ENCODE measurements at regions of chrX and their contacts with region 1.

Region 1: GRCh38 chrX:54639346-54640102 is 109.5 kb downstream of the GNL3L start:
- DNase-seq: peak; percentile 88 to 96 (median 88)
- H3K4me3 ChIP-seq: peak overlapping the region; percentile 81
- H3K4me3 Mint-ChIP-seq: peak overlapping the region; percentile 93 to 98 (median 97)
- H3K27ac ChIP-seq: peak overlapping the region; percentile 98
- H3K27ac Mint-ChIP-seq: peak overlapping the region; percentile 98 to 100 (median 100)
- H3K4me1 ChIP-seq: peaks cover 7% of the 10 kb centered on the region
- H3K4me1 Mint-ChIP-seq: peaks cover 9 to 20% (median 15%) of the 10 kb centered on the region in 3 donors
- H3K27me3 ChIP-seq: no peaks in the 10 kb centered on the region
- H3K27me3 Mint-ChIP-seq: peaks cover 0 to 4% of the 10 kb centered on the region in 2 donors

Region 2: DNA sequence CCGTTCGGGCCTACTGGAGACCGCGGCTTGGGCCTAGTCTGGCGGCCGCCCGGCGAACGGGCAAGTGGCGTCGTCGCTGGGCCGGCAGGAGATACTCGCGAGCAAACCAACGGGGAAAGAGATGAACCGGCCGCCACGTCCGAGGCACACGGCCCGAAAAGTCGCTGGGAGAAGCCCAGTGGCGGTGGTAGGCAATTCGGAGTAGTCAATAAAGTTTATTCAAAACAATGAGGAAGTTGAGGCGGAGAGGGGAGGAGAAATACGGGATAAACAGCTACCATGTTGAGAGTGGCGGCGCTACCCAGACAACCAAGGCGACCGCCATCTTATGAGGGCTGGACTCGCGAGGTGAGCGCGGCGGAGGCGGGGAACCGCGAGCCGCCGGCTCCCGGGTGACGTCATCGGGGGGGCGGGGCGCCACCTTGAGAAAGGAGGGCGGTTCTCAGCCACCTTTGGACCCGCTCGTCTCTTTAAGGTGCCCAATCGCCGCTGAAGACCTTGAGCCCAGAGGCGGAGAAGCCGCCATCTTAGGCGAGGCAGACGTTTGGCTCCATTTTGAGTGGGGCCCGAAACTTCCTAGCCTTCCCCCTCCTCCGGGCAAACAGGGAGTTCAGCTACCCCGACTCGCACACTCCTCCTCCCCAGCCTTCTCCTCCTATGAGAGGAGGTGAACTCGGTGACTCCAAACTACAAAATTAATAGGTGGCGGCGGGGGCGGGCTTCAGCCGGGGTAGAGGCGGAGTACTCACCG is 595.2 kb before region 1 on chrX and contains the start of gene PHF8:
- CTCF ChIA-PET with region 1: interaction called, 4 read pairs
- POLR2A ChIA-PET with region 1: interaction called, 15 read pairs
- DNase-seq: peak; percentile 91 to 97 (median 94)
- H3K4me3 ChIP-seq: peak within 1 kb of the TSS; percentile 85
- H3K4me3 Mint-ChIP-seq: peak within 1 kb of the TSS; percentile 89 to 97 (median 94)
- H3K27ac ChIP-seq: peak within 1 kb of the TSS; percentile 81
- H3K27ac Mint-ChIP-seq: peak within 1 kb of the TSS; percentile 96 to 100 (median 98)
- H3K4me1 ChIP-seq: peaks cover 13% of the 10 kb centered on the region
- H3K4me1 Mint-ChIP-seq: peaks cover 24 to 28% (median 27%) of the 10 kb centered on the region in 3 donors
- H3K27me3 ChIP-seq: no peaks in the 10 kb centered on the region
- H3K27me3 Mint-ChIP-seq: peaks cover 0 to 2% of the 10 kb centered on the region in 2 donors
- total RNA-seq, gene PHF8: 42.7 to 45.5 TPM

Region 3: DNA sequence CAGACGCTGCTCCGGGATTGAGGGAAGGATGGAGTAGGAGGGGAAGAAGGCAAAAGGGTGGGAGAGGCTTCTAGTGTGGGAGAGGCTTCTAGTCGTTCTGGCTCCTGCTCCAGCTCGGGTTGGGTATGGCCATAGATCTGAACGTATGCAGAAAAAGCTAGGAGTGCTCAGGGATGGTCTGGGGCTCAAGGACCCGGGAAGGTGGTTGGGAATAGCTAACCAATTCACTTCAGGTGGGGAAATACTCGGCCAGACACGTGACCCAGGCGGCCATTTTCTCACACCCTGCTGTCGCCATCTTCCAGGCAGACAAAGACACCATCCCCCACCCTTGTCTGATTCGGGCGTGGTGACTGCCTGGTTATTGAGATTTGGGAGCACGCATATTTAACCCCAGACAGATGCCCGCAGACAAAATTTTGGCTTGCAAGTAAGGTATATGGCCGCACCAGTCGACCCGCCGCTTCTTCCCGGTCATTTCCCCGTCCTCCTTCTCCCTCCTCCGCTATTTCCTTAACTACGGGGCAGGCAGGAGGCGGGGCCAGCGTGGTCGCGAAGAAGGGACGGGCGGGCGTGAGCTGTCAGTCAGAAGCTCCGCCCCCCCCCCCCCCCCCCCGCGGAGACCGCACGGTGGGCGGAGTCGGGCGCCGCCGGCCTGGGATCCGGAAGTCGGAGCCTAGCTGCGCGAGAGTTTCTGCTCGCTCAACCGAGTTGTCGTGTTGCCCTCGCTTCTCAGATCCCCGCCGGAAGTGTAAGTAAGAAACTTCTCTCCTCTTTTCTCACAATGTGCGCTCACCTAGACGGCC is 109.8 kb before region 1 on chrX and contains the start of gene GNL3L:
- CTCF ChIA-PET with region 1: interaction called, 10 read pairs
- POLR2A ChIA-PET with region 1: interaction called, 33 read pairs
- DNase-seq: peak; percentile 72 to 89 (median 77)
- H3K4me3 ChIP-seq: peak within 1 kb of the TSS; percentile 81
- H3K4me3 Mint-ChIP-seq: peak within 1 kb of the TSS; percentile 92 to 98 (median 96)
- H3K27ac ChIP-seq: peak within 1 kb of the TSS; percentile 86
- H3K27ac Mint-ChIP-seq: peak within 1 kb of the TSS; percentile 93 to 99 (median 95)
- H3K4me1 ChIP-seq: peaks cover 18% of the 10 kb centered on the region
- H3K4me1 Mint-ChIP-seq: peaks cover 37 to 40% (median 38%) of the 10 kb centered on the region in 3 donors
- H3K27me3 ChIP-seq: no peaks in the 10 kb centered on the region
- H3K27me3 Mint-ChIP-seq: peaks cover 0 to 4% of the 10 kb centered on the region in 2 donors
- total RNA-seq, gene GNL3L: 92.1 to 92.8 TPM

Region 4: GRCh38 chrX:54540289-54540688 is 99.2 kb before region 1 on chrX:
- CTCF ChIA-PET with region 1: no interaction called
- POLR2A ChIA-PET with region 1: no interaction called
- DNase-seq: no peak
- H3K4me3 ChIP-seq: no peak overlapping the region
- H3K4me3 Mint-ChIP-seq: no peak overlapping the region
- H3K27ac ChIP-seq: no peak overlapping the region
- H3K27ac Mint-ChIP-seq: peak overlapping the region in 2 of 8 donors; percentile 42 to 61
- H3K4me1 ChIP-seq: no peaks in the 10 kb centered on the region
- H3K4me1 Mint-ChIP-seq: peaks cover 0 to 12% (median 0%) of the 10 kb centered on the region in 3 donors
- H3K27me3 ChIP-seq: no peaks in the 10 kb centered on the region
- H3K27me3 Mint-ChIP-seq: no peaks in the 10 kb centered on the region

Region 5: GRCh38 chrX:54808605-54809483 is 169.3 kb after region 1 on chrX:
- CTCF ChIA-PET with region 1: interaction called, 3 read pairs
- POLR2A ChIA-PET with region 1: interaction called, 10 read pairs
- DNase-seq: peak; percentile 78 to 95 (median 87)
- H3K4me3 ChIP-seq: peak overlapping the region; percentile 86
- H3K4me3 Mint-ChIP-seq: peak overlapping the region; percentile 88 to 99 (median 98)
- H3K27ac ChIP-seq: peak overlapping the region; percentile 82
- H3K27ac Mint-ChIP-seq: peak overlapping the region; percentile 77 to 99 (median 94)
- H3K4me1 ChIP-seq: peaks cover 7% of the 10 kb centered on the region
- H3K4me1 Mint-ChIP-seq: peaks cover 9 to 24% (median 12%) of the 10 kb centered on the region in 3 donors
- H3K27me3 ChIP-seq: no peaks in the 10 kb centered on the region
- H3K27me3 Mint-ChIP-seq: peaks cover 0 to 8% of the 10 kb centered on the region in 2 donors

Region 6: DNA sequence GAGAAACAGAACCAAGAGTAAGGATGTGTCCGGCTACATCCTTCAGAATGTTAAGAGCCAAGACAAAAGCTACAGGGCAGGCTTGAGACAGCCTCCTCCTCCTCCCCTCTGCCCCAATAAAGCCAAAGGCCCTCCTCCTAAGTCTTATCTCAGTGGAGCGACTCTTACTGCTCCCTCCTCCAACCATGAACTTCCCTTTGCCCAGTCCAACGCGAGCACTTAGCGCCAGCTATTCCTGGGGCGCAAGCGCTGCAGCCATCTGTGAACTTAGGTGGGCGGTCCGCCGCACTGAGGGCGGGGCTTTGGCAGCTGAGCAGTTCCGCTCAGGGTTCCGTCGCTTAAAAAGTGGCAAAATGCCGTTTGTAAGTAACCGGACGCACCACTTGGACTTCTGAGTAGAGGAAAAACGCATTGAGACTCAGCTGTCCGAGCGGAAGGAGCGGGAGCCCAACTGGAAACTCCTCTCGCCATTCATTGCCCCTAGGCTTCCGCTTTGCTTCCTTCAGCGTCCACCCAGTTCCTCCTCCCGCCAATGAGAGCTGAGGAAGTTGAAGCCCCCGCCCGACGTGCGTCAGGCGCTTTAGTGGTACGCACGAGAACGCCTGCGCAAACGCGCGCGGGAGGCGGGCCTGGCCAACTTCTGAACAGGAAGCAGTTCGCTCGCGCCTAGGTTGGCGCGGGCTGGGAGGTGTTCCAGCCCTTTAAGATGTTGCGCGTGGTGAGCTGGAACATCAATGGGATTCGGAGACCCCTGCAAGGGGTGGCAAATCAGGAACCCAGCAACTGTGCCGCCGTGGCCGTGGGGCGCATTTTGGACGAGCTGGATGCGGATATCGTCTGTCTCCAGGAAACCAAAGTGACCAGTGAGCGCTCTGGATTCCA is 360.4 kb after region 1 on chrX and contains the start of gene APEX2:
- CTCF ChIA-PET with region 1: interaction called, 4 read pairs
- POLR2A ChIA-PET with region 1: interaction called, 12 read pairs
- DNase-seq: peak; percentile 80 to 92 (median 84)
- H3K4me3 ChIP-seq: peak within 1 kb of the TSS; percentile 91
- H3K4me3 Mint-ChIP-seq: peak within 1 kb of the TSS; percentile 85 to 98 (median 95)
- H3K27ac ChIP-seq: peak within 1 kb of the TSS; percentile 96
- H3K27ac Mint-ChIP-seq: peak within 1 kb of the TSS; percentile 86 to 99 (median 98)
- H3K4me1 ChIP-seq: peaks cover 14% of the 10 kb centered on the region
- H3K4me1 Mint-ChIP-seq: peaks cover 20 to 31% (median 24%) of the 10 kb centered on the region in 3 donors
- H3K27me3 ChIP-seq: no peaks in the 10 kb centered on the region
- H3K27me3 Mint-ChIP-seq: peaks cover 0 to 2% of the 10 kb centered on the region in 2 donors
- total RNA-seq, gene APEX2: 35.2 to 42.8 TPM